Activated CD4-positive, alpha-beta memory T cell treated with anti-CD3 and anti-CD28 coated beads for 36 hours (primary cell): ENCODE measurements at regions of chr1 and their contacts with region 1.

Region 1: DNA sequence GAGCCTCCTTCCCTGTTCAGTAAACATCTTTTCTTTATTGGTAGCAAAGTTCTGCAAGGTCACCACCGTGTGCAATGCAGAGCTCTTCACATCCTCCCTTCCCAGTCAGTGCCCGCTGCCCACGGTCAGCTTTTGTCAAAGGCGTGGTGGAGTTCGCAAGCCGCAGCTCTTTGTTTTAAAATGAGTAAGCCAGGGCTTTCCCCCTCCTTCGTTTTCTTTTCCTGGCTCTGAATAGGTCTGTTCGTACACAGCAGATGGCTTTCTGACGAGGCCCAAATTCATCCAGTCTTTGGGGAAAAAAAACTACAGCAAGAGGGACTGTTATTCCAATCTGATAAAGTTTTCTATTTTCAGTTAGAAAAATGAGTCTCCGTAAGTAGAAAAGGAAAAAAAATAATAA is 153.2 kb downstream of the LRIG2 start:
- DNase-seq: peak; percentile 72
- H3K4me3 Mint-ChIP-seq: no peak overlapping the region
- H3K27ac Mint-ChIP-seq: no peak overlapping the region
- H3K4me1 Mint-ChIP-seq: peaks cover 9% of the 10 kb centered on the region
- H3K27me3 Mint-ChIP-seq: peaks cover 17% of the 10 kb centered on the region

Region 2: DNA sequence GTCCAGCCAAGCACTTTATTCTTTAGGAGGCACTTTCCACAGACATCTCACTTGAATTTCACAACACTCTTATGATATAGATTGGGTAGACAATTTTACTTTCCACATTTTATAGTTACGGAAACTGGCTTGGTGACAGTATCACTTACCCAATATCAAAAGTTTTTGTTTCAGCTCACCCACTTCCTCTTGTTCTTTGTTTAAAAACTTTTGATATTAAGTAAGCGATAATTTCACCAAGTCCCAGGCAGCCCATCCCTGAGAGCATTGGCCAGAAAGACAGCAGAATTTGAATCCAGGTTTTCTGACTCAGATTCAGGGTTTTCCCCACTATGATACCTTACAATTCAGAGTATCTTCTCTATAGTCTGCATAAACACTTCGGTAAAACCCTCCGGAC is 93.1 kb before region 1 on chr1:
- CTCF ChIA-PET with region 1: no interaction called
- POLR2A ChIA-PET with region 1: no interaction called
- intact Hi-C with region 1: loop called (anchors 5 kb)
- DNase-seq: peak; percentile 63
- H3K4me3 Mint-ChIP-seq: no peak overlapping the region
- H3K27ac Mint-ChIP-seq: peak overlapping the region; percentile 18
- H3K4me1 Mint-ChIP-seq: peaks cover 43% of the 10 kb centered on the region
- H3K27me3 Mint-ChIP-seq: no peaks in the 10 kb centered on the region